Stomach (tissue), 19 donors: ENCODE measurements at regions of chr2 and their contacts with region 1.

Region 1: GRCh38 chr2:209423562-209424198 is at the start of gene MAP2:
- DNase-seq: peak; percentile 87 to 96
- H3K4me3 ChIP-seq: peak within 1 kb of the TSS; percentile 56 to 80 (median 72)
- H3K27ac ChIP-seq: peak within 1 kb of the TSS in 4 of 5 donors; percentile 38 to 67 (median 56)
- H3K4me1 ChIP-seq: peaks cover 0 to 25% (median 20%) of the 10 kb centered on the region in 4 donors
- H3K27me3 ChIP-seq: peaks cover 0 to 8% (median 0%) of the 10 kb centered on the region in 3 donors
- CTCF ChIP-seq: peak in 4 of 7 experiments; percentile 35 to 94 (median 80)
- EP300 ChIP-seq: no peak
- POLR2A ChIP-seq: peak in 1 of 4 donors; percentile 12
- total RNA-seq, gene MAP2: 11.1 to 24.6 (median 14.5) TPM

Region 2: DNA sequence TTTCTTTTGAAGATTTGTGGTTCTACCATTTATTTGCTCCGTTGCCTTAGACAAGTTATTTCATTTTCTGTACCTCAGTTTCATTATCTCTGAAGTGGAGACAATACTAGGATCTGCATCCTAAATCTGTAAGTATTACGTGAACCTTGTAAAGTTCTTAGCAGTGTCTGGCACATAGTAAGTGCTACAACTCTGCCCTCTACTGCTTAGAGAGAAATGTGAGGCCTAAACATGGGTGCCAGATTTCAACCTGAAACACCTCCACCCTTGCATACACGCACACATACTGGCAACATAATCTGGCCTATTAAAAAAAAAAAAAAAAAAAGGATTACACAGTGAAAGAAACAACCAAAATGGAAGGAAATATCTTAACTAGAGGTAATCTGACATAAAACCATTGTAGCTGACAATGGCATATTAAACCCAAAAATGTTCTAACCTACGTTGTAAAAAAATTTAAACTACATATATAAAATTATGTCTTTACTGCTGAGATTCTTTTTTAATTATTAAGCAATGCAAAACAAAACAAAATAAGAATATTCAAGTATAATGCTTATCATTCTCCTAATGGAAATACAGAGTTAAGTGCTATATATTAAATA is 132.8 kb after region 1 on chr2:
- intact Hi-C with region 1: loop called (anchors 10 kb)
- DNase-seq: peak in 1 of 2 donors; percentile 67
- H3K4me3 ChIP-seq: no peak overlapping the region
- H3K27ac ChIP-seq: no peak overlapping the region
- H3K4me1 ChIP-seq: no peaks in the 10 kb centered on the region
- H3K27me3 ChIP-seq: no peaks in the 10 kb centered on the region
- CTCF ChIP-seq: peak in 3 of 7 experiments; percentile 13 to 43 (median 25)
- EP300 ChIP-seq: no peak
- POLR2A ChIP-seq: no peak